ENCODE measurements at regions of chr1 and their contacts with region 1.

Region 1: GRCh38 chr1:15272009-15272788 is 25.2 kb downstream of the FHAD1 start:
- DNase-seq: peak; percentile 73 to 86 (median 83)
- H3K4me3 ChIP-seq: peak overlapping the region in 1 of 4 donors; percentile 18
- H3K27ac ChIP-seq: no peak overlapping the region
- H3K4me1 ChIP-seq: peaks cover 0 to 4% of the 10 kb centered on the region in 2 donors
- H3K27me3 ChIP-seq: no peaks in the 10 kb centered on the region
- CTCF ChIP-seq: peak; percentile 62 to 90 (median 89)
- POLR2A ChIP-seq: no peak

Region 2: DNA sequence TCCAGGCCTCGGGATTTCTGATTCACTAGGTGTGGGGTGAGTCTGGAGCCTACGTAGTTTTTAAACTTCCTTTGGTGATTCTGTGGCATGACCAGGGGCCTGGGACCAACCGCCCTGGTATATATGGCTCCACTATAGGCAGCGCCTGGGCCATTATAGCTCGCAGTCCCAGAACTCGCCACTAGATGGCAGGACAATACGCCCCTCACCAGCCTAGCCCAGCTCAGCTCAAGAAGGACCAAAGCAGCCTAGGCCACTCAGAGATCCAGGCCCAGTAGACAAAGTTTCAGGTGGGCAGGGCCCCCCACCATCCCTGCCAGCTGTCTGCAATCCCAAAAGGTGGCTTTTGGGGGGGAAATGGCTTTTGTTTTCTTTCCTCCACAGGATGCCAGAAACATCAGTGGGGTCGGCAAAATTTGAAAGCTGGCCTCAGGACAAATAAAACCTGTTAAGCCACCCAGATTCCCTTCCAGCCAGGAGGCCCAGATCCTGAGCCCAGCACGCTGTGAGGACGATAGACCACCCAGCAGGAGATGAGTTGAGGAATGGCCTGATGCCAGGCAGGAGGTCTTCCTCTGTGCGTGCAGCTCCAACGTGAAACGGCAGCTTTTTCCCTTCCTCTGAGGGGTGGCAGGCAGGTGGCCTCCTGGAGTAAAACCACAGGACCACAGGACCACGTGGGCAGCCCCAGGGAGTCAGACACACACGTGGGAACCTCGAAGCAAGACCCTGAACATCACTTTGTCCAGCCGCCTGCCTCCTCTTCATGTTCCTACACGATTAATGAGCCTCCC is 143.5 kb before region 1 on chr1:
- intact Hi-C with region 1: loop called (anchors 5 kb)
- DNase-seq: peak; percentile 51 to 92 (median 79)
- H3K4me3 ChIP-seq: no peak overlapping the region
- H3K27ac ChIP-seq: no peak overlapping the region
- H3K4me1 ChIP-seq: no peaks in the 10 kb centered on the region
- H3K27me3 ChIP-seq: no peaks in the 10 kb centered on the region
- CTCF ChIP-seq: peak; percentile 84 to 94 (median 91)
- POLR2A ChIP-seq: no peak

Region 3: GRCh38 chr1:15152318-15153183 is 119.6 kb before region 1 on chr1:
- intact Hi-C with region 1: loop called (anchors 5 kb)
- DNase-seq: peak; percentile 89 to 96 (median 93)
- H3K4me3 ChIP-seq: peak overlapping the region in 3 of 4 donors; percentile 49 to 86 (median 72)
- H3K27ac ChIP-seq: peak overlapping the region; percentile 85 to 99 (median 91)
- H3K4me1 ChIP-seq: peaks cover 11 to 63% of the 10 kb centered on the region in 2 donors
- H3K27me3 ChIP-seq: no peaks in the 10 kb centered on the region
- CTCF ChIP-seq: peak; percentile 31 to 77 (median 64)
- POLR2A ChIP-seq: peak; percentile 50 to 89

Region 4: GRCh38 chr1:15206418-15207030 is 65.7 kb before region 1 on chr1:
- intact Hi-C with region 1: loop called in 1 of 2 experiments (anchors 10 kb)
- DNase-seq: peak in 3 of 7 donors; percentile 21 to 58 (median 42)
- H3K4me3 ChIP-seq: no peak overlapping the region
- H3K27ac ChIP-seq: peak overlapping the region in 3 of 5 donors; percentile 44 to 64 (median 58)
- H3K4me1 ChIP-seq: peaks cover 29 to 56% of the 10 kb centered on the region in 2 donors
- H3K27me3 ChIP-seq: no peaks in the 10 kb centered on the region
- CTCF ChIP-seq: no peak
- POLR2A ChIP-seq: no peak